ENCODE measurements at regions of chr2 and their contacts with region 1.

Region 1: DNA sequence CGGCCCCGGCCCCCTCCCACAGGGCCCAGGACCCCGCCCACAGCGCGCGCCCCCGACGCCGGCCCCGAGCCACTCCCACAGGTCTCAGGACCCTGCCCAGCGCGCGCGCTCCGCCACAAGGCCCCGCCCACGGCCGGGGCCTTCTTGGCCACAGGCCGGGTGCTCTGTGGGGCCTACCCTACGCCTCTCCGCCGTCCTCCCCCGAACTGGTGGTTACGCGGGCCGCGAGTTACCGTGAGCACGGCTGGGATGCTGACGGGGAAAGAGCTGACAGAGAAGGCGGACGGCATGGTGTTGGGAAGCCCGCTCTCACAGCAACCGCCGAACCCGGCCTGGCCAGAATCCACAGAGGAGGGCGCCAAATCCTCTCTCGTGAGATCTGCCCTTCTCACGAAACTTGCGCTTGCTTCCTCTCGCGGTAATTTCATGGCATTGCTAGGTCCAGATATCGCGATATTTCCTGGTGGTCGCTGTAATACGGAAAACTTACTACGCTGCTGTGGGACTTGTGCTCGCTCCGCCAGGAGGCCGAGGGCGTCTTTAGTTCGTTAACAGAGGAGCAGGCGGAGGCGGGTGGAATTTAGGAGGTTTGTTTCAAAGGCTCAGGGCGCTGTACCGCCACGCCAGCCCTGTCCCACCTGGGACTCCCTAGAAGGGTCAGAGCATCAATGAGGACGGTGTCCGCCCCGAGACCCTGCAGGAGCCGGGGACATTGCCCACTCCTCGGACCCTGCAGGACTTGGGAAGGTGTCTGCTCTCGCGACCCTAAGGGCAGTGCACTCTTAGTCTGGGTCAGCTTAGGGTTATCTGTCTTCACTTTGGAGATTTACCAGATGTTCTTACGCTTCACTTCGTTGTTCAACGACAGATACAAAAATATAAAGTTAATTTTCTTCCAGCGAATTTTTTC is at the start of gene TMEM18:
- DNase-seq: peak; percentile 97 to 98 (median 98)
- H3K4me3 ChIP-seq: peak within 1 kb of the TSS; percentile 63 to 85 (median 68)
- H3K4me3 Mint-ChIP-seq: peak within 1 kb of the TSS; percentile 90 to 96
- H3K27ac ChIP-seq: peak within 1 kb of the TSS; percentile 98 to 99
- H3K27ac Mint-ChIP-seq: peak within 1 kb of the TSS; percentile 97 to 100 (median 98)
- H3K4me1 ChIP-seq: peaks cover 16 to 24% of the 10 kb centered on the region in 2 donors
- H3K4me1 Mint-ChIP-seq: peaks cover 20% of the 10 kb centered on the region
- H3K27me3 ChIP-seq: no peaks in the 10 kb centered on the region
- H3K27me3 Mint-ChIP-seq: peaks cover 0 to 2% (median 0%) of the 10 kb centered on the region in 3 donors
- CTCF ChIP-seq: peak; percentile 44
- polyA plus RNA-seq, gene TMEM18: 9.3 to 23.5 (median 21.8) TPM

Region 2: GRCh38 chr2:166381-166780 is 510.9 kb before region 1 on chr2:
- intact Hi-C with region 1: no loop called
- DNase-seq: no peak
- H3K4me3 ChIP-seq: no peak overlapping the region
- H3K4me3 Mint-ChIP-seq: no peak overlapping the region
- H3K27ac ChIP-seq: no peak overlapping the region
- H3K27ac Mint-ChIP-seq: no peak overlapping the region
- H3K4me1 ChIP-seq: no peaks in the 10 kb centered on the region
- H3K4me1 Mint-ChIP-seq: no peaks in the 10 kb centered on the region
- H3K27me3 ChIP-seq: no peaks in the 10 kb centered on the region
- H3K27me3 Mint-ChIP-seq: peaks cover 0 to 3% (median 1%) of the 10 kb centered on the region in 3 donors
- CTCF ChIP-seq: no peak

Region 3: DNA sequence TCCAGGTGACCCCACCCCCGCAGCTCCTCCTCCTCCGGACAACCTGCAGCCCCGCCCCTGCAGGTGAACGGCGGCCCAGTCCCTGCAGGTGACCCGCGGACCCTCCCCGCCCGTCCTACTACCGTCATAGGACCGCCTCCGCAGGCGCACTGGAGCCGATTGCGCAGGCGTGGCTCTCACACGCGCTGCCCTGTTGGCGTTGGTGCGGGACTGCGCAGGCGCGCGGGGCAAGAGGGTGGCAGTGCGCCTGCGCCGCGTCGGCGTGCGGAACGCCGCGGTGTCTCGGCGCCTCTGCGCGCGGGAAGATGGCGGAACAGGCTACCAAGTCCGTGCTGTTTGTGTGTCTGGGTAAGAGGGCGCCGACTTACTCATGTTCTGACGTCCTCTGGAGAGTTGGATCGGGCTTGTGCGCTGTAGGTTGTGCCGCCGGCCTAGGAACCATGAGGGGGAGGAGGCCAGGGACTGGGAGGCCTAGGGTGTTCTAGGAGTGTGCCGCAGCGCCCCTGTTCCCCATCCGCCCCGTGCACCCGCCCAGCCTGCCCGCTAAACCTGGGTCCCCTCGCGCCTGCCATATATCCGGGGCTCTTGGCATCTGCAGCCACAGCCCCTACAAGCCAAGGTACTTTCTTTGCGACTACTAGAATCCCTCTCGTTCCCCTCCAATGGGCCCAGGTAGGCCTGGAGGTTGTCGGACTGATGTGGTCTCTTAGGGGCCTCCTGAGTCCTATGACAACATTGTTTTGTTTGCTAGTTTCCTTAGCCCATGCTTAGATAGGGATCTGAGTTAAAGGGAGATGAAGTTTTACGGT is 412.4 kb before region 1 on chr2 and contains the start of gene ACP1:
- intact Hi-C with region 1: loop called in 1 of 2 experiments (anchors 10 kb)
- DNase-seq: peak; percentile 92 to 95 (median 93)
- H3K4me3 ChIP-seq: peak within 1 kb of the TSS; percentile 75 to 92 (median 83)
- H3K4me3 Mint-ChIP-seq: peak within 1 kb of the TSS; percentile 88 to 95
- H3K27ac ChIP-seq: peak within 1 kb of the TSS; percentile 60 to 93
- H3K27ac Mint-ChIP-seq: peak within 1 kb of the TSS; percentile 86 to 95 (median 92)
- H3K4me1 ChIP-seq: peaks cover 16 to 20% of the 10 kb centered on the region in 2 donors
- H3K4me1 Mint-ChIP-seq: peaks cover 32% of the 10 kb centered on the region
- H3K27me3 ChIP-seq: no peaks in the 10 kb centered on the region
- H3K27me3 Mint-ChIP-seq: peaks cover 3 to 9% (median 7%) of the 10 kb centered on the region in 3 donors
- CTCF ChIP-seq: no peak
- polyA plus RNA-seq, gene ACP1: 51.8 to 77.0 (median 73.2) TPM

Region 4: DNA sequence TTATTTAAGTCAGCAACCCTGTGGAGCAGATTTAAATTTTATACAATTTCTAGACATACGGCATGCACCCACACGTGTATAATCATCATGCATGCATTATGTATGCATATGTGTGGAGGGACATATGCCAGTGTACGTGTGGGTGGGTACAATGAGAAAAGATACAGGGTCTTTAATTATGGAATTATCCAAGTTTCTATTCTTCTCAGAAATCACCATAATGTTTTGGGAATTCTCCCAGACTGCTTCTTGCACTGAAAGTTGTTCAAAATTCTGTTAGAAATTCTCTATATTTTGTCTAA is 63.8 kb after region 1 on chr2:
- intact Hi-C with region 1: loop called in 1 of 2 experiments (anchors 2 kb)
- DNase-seq: no peak
- H3K4me3 ChIP-seq: no peak overlapping the region
- H3K4me3 Mint-ChIP-seq: no peak overlapping the region
- H3K27ac ChIP-seq: no peak overlapping the region
- H3K27ac Mint-ChIP-seq: no peak overlapping the region
- H3K4me1 ChIP-seq: peaks cover 12 to 14% of the 10 kb centered on the region in 2 donors
- H3K4me1 Mint-ChIP-seq: peaks cover 14% of the 10 kb centered on the region
- H3K27me3 ChIP-seq: peaks cover 9 to 31% of the 10 kb centered on the region in 2 donors
- H3K27me3 Mint-ChIP-seq: peaks cover 24 to 37% (median 33%) of the 10 kb centered on the region in 3 donors
- CTCF ChIP-seq: no peak